Natural killer cell (primary cell): ENCODE measurements at regions of chr22 and their contacts with region 1.

Region 1: GRCh38 chr22:39170825-39171622 is 18.5 kb upstream of the CBX7 start:
- DNase-seq: peak; percentile 87 to 91
- ATAC-seq: peak; percentile 44 to 77 (median 60)
- H3K4me3 ChIP-seq: no peak overlapping the region
- H3K4me3 Mint-ChIP-seq: peak overlapping the region; percentile 70
- H3K27ac ChIP-seq: peak overlapping the region; percentile 56
- H3K27ac Mint-ChIP-seq: peak overlapping the region; percentile 71 to 98
- H3K4me1 ChIP-seq: peaks cover 56% of the 10 kb centered on the region
- H3K4me1 Mint-ChIP-seq: peaks cover 34 to 55% of the 10 kb centered on the region in 2 donors
- H3K27me3 ChIP-seq: no peaks in the 10 kb centered on the region
- H3K27me3 Mint-ChIP-seq: peaks cover 0 to 6% of the 10 kb centered on the region in 2 donors
- CTCF ChIP-seq: peak; percentile 93

Region 2: DNA sequence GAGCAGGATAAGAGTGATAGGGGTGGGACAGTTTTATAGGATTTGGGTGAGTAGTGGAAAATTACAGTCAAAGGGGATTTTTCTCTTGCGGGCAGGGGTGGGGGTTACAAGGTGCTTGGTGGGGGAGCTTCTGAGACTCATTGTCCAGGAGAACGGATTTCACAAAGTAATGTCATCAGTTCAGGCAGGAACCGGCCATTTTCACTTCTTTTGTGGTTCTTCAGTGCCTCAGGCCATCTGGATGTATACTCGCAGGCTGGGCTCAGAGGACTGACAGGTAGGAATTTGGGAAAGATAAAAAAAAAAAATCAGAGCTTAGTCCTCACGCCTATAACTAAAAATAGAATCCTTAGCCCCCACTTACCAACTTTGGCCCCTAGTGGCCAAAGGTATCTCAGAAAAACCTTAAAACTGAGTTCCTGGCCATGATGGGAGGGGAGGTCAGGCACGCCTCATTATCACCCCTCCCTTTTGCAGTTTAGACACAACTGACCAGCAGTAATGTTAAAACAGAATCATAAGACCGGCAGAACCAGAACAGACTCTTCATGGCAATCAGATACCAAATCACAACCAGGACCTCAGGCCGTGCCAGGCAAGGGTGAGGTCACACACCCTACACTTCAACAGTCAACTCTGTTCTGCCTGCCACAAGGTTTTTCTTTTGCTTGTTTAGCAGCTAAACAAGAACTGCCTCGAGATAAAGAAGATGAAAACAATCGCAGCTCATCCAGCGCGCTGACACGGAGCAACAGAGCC is 102.8 kb before region 1 on chr22:
- intact Hi-C with region 1: no loop called
- DNase-seq: no peak
- ATAC-seq: no peak
- H3K4me3 ChIP-seq: peak overlapping the region; percentile 28
- H3K4me3 Mint-ChIP-seq: no peak overlapping the region
- H3K27ac ChIP-seq: peak overlapping the region; percentile 92
- H3K27ac Mint-ChIP-seq: no peak overlapping the region
- H3K4me1 ChIP-seq: peaks cover 51% of the 10 kb centered on the region
- H3K4me1 Mint-ChIP-seq: peaks cover 5 to 9% of the 10 kb centered on the region in 2 donors
- H3K27me3 ChIP-seq: no peaks in the 10 kb centered on the region
- H3K27me3 Mint-ChIP-seq: no peaks in the 10 kb centered on the region
- CTCF ChIP-seq: no peak

Region 3: GRCh38 chr22:39117585-39118191 is 53.3 kb before region 1 on chr22:
- intact Hi-C with region 1: loop called (anchors 1 kb)
- DNase-seq: peak; percentile 71 to 87
- ATAC-seq: peak; percentile 76 to 90 (median 86)
- H3K4me3 ChIP-seq: peak overlapping the region; percentile 2
- H3K4me3 Mint-ChIP-seq: peak overlapping the region; percentile 82
- H3K27ac ChIP-seq: peak overlapping the region; percentile 95
- H3K27ac Mint-ChIP-seq: peak overlapping the region; percentile 94 to 99
- H3K4me1 ChIP-seq: peaks cover 40% of the 10 kb centered on the region
- H3K4me1 Mint-ChIP-seq: peaks cover 61 to 66% of the 10 kb centered on the region in 2 donors
- H3K27me3 ChIP-seq: no peaks in the 10 kb centered on the region
- H3K27me3 Mint-ChIP-seq: no peaks in the 10 kb centered on the region
- CTCF ChIP-seq: peak; percentile 71

Region 4: DNA sequence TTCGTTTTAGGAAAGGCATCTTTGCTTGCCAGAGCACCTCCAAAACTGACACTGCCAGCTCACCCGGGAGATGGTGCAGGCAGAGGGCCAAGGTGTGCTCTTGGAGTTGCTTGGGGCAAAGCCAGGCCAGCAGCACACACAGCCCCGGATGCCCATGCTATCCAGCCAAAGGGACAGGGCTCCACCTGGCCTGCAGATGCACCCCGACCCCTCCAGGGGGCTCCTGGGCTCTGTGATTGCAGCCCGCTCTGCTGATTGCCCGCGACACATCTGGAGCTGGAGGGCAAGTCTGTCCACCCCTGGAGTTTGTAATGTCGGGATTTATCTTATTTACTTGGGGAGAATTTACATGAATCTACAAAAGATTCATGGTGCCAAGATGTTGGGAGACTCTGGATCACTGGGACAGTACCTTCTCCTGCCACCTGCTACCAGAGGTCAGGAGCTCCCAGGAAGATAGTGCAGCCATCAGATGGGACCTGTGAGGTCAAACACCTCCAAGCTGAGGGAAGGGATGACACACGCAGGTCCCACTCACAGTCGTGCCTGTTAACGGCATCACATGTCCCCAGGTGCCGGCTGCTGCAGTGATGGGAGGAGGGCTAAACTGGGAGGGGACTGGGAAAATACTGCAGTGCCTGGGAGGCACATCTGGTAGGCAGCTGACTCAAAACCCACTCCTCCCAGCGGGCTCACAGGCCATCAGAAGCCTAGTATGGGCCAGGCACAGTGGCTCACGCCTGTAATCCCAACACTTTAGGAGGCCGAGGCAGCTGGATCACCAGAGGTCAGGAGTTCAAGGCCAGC is 35.7 kb before region 1 on chr22:
- intact Hi-C with region 1: no loop called
- DNase-seq: peak in 1 of 2 donors; percentile 64
- ATAC-seq: peak; percentile 56 to 88 (median 87)
- H3K4me3 ChIP-seq: no peak overlapping the region
- H3K4me3 Mint-ChIP-seq: no peak overlapping the region
- H3K27ac ChIP-seq: no peak overlapping the region
- H3K27ac Mint-ChIP-seq: no peak overlapping the region
- H3K4me1 ChIP-seq: peaks cover 8% of the 10 kb centered on the region
- H3K4me1 Mint-ChIP-seq: peaks cover 0 to 13% of the 10 kb centered on the region in 2 donors
- H3K27me3 ChIP-seq: no peaks in the 10 kb centered on the region
- H3K27me3 Mint-ChIP-seq: no peaks in the 10 kb centered on the region
- CTCF ChIP-seq: peak; percentile 46

Region 5: GRCh38 chr22:39205338-39206021 is 34.5 kb after region 1 on chr22:
- intact Hi-C with region 1: loop called (anchors 5 kb)
- DNase-seq: peak; percentile 63 to 76
- ATAC-seq: peak; percentile 84 to 95 (median 85)
- H3K4me3 ChIP-seq: no peak overlapping the region
- H3K4me3 Mint-ChIP-seq: no peak overlapping the region
- H3K27ac ChIP-seq: peak overlapping the region; percentile 72
- H3K27ac Mint-ChIP-seq: peak overlapping the region in 1 of 2 donors; percentile 91
- H3K4me1 ChIP-seq: peaks cover 30% of the 10 kb centered on the region
- H3K4me1 Mint-ChIP-seq: peaks cover 7 to 42% of the 10 kb centered on the region in 2 donors
- H3K27me3 ChIP-seq: no peaks in the 10 kb centered on the region
- H3K27me3 Mint-ChIP-seq: peaks cover 0 to 15% of the 10 kb centered on the region in 2 donors
- CTCF ChIP-seq: no peak

Region 6: GRCh38 chr22:39311444-39312400 is 140.7 kb after region 1 on chr22:
- intact Hi-C with region 1: loop called (anchors 1 kb)
- DNase-seq: peak in 1 of 2 donors; percentile 26
- ATAC-seq: no peak
- H3K4me3 ChIP-seq: no peak overlapping the region
- H3K4me3 Mint-ChIP-seq: no peak overlapping the region
- H3K27ac ChIP-seq: no peak overlapping the region
- H3K27ac Mint-ChIP-seq: peak overlapping the region; percentile 27 to 43
- H3K4me1 ChIP-seq: peaks cover 54% of the 10 kb centered on the region
- H3K4me1 Mint-ChIP-seq: peaks cover 5 to 39% of the 10 kb centered on the region in 2 donors
- H3K27me3 ChIP-seq: no peaks in the 10 kb centered on the region
- H3K27me3 Mint-ChIP-seq: no peaks in the 10 kb centered on the region
- CTCF ChIP-seq: no peak

Region 7: GRCh38 chr22:39349506-39349966 is 178.5 kb after region 1 on chr22:
- intact Hi-C with region 1: no loop called
- DNase-seq: peak; percentile 37 to 67
- ATAC-seq: peak; percentile 35 to 65 (median 49)
- H3K4me3 ChIP-seq: peak overlapping the region; percentile 73
- H3K4me3 Mint-ChIP-seq: peak overlapping the region; percentile 90
- H3K27ac ChIP-seq: peak overlapping the region; percentile 87
- H3K27ac Mint-ChIP-seq: peak overlapping the region; percentile 72 to 86
- H3K4me1 ChIP-seq: peaks cover 56% of the 10 kb centered on the region
- H3K4me1 Mint-ChIP-seq: peaks cover 14 to 30% of the 10 kb centered on the region in 2 donors
- H3K27me3 ChIP-seq: peaks cover 7% of the 10 kb centered on the region
- H3K27me3 Mint-ChIP-seq: peaks cover 2 to 6% of the 10 kb centered on the region in 2 donors
- CTCF ChIP-seq: no peak

Region 8: DNA sequence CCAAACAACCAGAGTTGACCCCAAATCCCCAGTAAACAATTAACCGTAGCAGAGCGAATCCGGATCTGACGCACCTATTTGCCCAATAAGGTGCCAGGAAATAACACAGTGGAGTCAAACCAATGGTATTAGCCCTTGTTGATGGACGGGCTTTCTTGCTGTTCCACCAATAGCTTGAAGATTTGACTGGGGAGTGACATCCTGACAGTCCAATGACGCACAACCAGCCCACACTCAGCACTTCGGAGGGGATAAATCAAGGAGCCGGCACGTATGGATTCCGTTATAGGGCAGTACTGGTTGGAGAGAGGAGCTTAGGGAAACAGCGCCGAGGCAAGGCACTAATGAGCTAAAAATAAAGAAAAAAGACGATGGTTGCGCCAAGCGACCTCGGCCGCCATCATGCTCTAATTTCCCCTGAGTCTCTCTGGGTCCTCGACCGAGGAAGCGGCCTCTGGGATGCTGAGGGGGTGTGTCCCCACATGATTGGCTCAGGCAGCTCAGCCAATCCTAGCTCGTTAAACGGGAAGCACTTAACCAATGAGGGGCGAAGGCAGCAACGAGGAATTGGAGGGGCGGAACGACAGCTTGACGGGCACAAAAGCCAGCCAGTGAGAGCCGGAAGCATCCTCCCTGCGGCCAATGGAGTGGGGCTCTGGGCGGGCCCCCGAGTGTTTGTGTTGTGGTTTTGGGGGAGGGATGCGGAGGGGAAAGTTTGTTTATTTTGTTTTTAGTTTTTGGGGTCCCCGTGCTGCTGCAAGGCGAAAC is 873.3 kb after region 1 on chr22:
- intact Hi-C with region 1: loop called (anchors 10 kb)
- DNase-seq: peak; percentile 98 to 99
- ATAC-seq: peak; percentile 82 to 92 (median 85)
- H3K4me3 ChIP-seq: peak overlapping the region; percentile 59
- H3K4me3 Mint-ChIP-seq: peak overlapping the region; percentile 97
- H3K27ac ChIP-seq: peak overlapping the region; percentile 87
- H3K27ac Mint-ChIP-seq: peak overlapping the region; percentile 97 to 99
- H3K4me1 ChIP-seq: peaks cover 21% of the 10 kb centered on the region
- H3K4me1 Mint-ChIP-seq: peaks cover 35 to 36% of the 10 kb centered on the region in 2 donors
- H3K27me3 ChIP-seq: no peaks in the 10 kb centered on the region
- H3K27me3 Mint-ChIP-seq: peaks cover 9 to 13% of the 10 kb centered on the region in 2 donors
- CTCF ChIP-seq: no peak